Activated B cell treated with CpG ODN at 0.5 μM for 24 hours (primary cell): ENCODE measurements at regions of chr12 and their contacts with region 1.

Region 1: GRCh38 chr12:113098446-113098896 is 37.1 kb downstream of the RASAL1 start:
- DNase-seq: peak; percentile 71
- ATAC-seq: peak; percentile 90
- H3K4me3 Mint-ChIP-seq: no peak overlapping the region
- H3K27ac Mint-ChIP-seq: peak overlapping the region; percentile 35
- H3K4me1 Mint-ChIP-seq: peaks cover 18% of the 10 kb centered on the region
- H3K27me3 Mint-ChIP-seq: no peaks in the 10 kb centered on the region
- CTCF ChIP-seq: no peak

Region 2: GRCh38 chr12:112798006-112798760 is 300.3 kb before region 1 on chr12:
- CTCF ChIA-PET with region 1: no interaction called
- POLR2A ChIA-PET with region 1: no interaction called
- intact Hi-C with region 1: no loop called
- DNase-seq: no peak
- ATAC-seq: no peak
- H3K4me3 Mint-ChIP-seq: no peak overlapping the region
- H3K27ac Mint-ChIP-seq: no peak overlapping the region
- H3K4me1 Mint-ChIP-seq: no peaks in the 10 kb centered on the region
- H3K27me3 Mint-ChIP-seq: peaks cover 53% of the 10 kb centered on the region
- CTCF ChIP-seq: no peak

Region 3: GRCh38 chr12:112992541-112993398 is 105.7 kb before region 1 on chr12:
- CTCF ChIA-PET with region 1: interaction called, 14 read pairs
- POLR2A ChIA-PET with region 1: no interaction called
- intact Hi-C with region 1: loop called (anchors 1 kb)
- DNase-seq: no peak
- ATAC-seq: peak; percentile 72
- H3K4me3 Mint-ChIP-seq: no peak overlapping the region
- H3K27ac Mint-ChIP-seq: peak overlapping the region; percentile 59
- H3K4me1 Mint-ChIP-seq: peaks cover 29% of the 10 kb centered on the region
- H3K27me3 Mint-ChIP-seq: no peaks in the 10 kb centered on the region
- CTCF ChIP-seq: peak; percentile 34

Region 4: GRCh38 chr12:113065126-113066007 is 33.1 kb before region 1 on chr12:
- CTCF ChIA-PET with region 1: interaction called, 16 read pairs
- POLR2A ChIA-PET with region 1: interaction called, 57 read pairs
- intact Hi-C with region 1: no loop called
- DNase-seq: no peak
- ATAC-seq: peak; percentile 19
- H3K4me3 Mint-ChIP-seq: peak overlapping the region; percentile 57
- H3K27ac Mint-ChIP-seq: no peak overlapping the region
- H3K4me1 Mint-ChIP-seq: peaks cover 62% of the 10 kb centered on the region
- H3K27me3 Mint-ChIP-seq: no peaks in the 10 kb centered on the region
- CTCF ChIP-seq: no peak

Region 5: DNA sequence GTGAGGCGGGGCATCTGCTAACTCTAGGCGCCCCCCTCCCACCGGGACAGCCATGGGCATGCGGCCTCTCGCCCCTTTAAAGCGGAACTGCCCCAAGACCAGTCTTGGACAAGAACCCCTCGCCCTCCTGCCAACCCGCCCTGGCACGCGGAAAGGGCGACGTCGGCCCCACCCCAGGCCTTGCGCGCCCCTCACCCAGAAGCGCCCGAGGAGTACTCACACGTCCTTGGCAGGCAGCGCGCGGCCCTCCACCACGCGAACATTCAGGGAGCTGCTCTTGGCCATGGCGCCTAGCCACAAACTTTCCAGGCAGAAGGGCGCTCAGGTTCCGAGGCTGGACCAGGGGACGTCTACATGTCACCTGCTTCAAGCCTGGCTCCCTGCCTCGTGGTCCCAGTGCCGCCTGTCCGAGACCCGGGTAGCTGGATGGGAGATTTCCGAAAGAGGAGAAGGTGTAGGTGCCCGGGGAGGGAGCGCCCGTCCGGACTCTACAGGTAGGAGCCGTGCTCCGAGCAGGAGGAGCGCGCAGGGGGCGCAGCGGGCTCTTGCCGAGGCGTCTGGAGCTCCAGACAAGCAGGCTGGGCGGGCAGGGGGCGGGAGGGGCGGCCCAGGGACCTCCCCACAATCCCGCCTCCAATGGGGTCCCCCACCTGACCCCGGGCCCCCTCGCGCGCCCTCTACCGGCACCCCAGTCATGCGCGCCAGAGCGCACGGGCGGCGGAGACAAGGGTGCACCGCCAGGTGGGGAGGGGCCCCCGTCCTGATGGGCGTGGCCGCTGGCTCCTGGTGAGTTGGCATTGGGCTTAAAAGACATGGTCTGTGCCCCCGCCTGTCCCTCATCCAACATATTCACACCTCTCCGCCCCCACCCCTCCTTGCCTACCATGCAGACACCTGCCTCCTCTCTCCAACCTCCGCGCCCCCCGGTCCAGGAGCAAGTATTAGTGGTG is 37.0 kb after region 1 on chr12 and contains the start of gene RASAL1:
- CTCF ChIA-PET with region 1: interaction called, 3 read pairs
- POLR2A ChIA-PET with region 1: no interaction called
- intact Hi-C with region 1: loop called (anchors 5 kb)
- DNase-seq: peak; percentile 64
- ATAC-seq: peak; percentile 84
- H3K4me3 Mint-ChIP-seq: peak within 1 kb of the TSS; percentile 77
- H3K27ac Mint-ChIP-seq: peak within 1 kb of the TSS; percentile 80
- H3K4me1 Mint-ChIP-seq: peaks cover 30% of the 10 kb centered on the region
- H3K27me3 Mint-ChIP-seq: peaks cover 11% of the 10 kb centered on the region
- CTCF ChIP-seq: no peak
- total RNA-seq, gene RASAL1: 4.9 and 7.1 TPM in 2 replicates

Region 6: GRCh38 chr12:113174461-113175384 is 76.3 kb after region 1 on chr12:
- CTCF ChIA-PET with region 1: interaction called, 35 read pairs
- POLR2A ChIA-PET with region 1: interaction called, 5 read pairs
- intact Hi-C with region 1: loop called (anchors 1 kb)
- DNase-seq: peak; percentile 78
- ATAC-seq: peak; percentile 81
- H3K4me3 Mint-ChIP-seq: no peak overlapping the region
- H3K27ac Mint-ChIP-seq: no peak overlapping the region
- H3K4me1 Mint-ChIP-seq: peaks cover 32% of the 10 kb centered on the region
- H3K27me3 Mint-ChIP-seq: no peaks in the 10 kb centered on the region
- CTCF ChIP-seq: peak; percentile 95

Region 7: DNA sequence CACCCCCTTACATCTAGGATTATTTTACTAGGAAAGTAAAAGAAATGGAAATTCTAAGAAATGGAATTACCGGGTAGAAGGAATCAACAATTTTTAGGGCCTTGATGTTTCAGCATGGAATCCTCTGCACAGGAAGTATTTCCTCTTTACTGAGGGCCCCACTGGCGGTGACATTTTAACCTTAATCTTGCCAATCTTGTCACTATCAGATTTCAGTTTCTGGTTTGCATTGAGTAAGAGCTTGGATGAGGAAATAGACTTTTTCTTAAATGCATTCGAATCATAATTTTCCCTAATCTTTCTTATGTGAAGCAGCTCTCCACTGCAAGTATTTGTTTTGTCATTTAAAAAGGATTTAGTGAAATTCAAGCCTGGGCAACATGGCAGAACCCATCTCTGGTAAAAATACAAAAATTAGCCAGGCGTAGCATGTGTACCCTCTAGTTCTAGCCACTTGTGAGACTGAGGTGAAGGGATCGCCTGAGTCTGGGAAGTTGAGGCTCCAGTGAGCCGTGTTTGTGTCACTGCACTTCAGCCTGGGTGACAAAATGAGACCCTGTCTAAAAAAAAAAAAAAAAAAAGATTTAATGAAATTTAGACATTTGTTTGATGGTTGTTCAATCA is 163.5 kb after region 1 on chr12:
- CTCF ChIA-PET with region 1: no interaction called
- POLR2A ChIA-PET with region 1: no interaction called
- intact Hi-C with region 1: no loop called
- DNase-seq: no peak
- ATAC-seq: no peak
- H3K4me3 Mint-ChIP-seq: no peak overlapping the region
- H3K27ac Mint-ChIP-seq: no peak overlapping the region
- H3K4me1 Mint-ChIP-seq: peaks cover 26% of the 10 kb centered on the region
- H3K27me3 Mint-ChIP-seq: no peaks in the 10 kb centered on the region
- CTCF ChIP-seq: no peak